ENCODE measurements at regions of chr18 and their contacts with region 1.

Region 1: GRCh38 chr18:10851824-10852319 is 297.5 kb downstream of the PIEZO2 start:
- DNase-seq: no peak
- H3K4me3 Mint-ChIP-seq: no peak overlapping the region
- H3K27ac Mint-ChIP-seq: no peak overlapping the region
- H3K4me1 Mint-ChIP-seq: no peaks in the 10 kb centered on the region
- H3K27me3 Mint-ChIP-seq: peaks cover 21% of the 10 kb centered on the region

Region 2: DNA sequence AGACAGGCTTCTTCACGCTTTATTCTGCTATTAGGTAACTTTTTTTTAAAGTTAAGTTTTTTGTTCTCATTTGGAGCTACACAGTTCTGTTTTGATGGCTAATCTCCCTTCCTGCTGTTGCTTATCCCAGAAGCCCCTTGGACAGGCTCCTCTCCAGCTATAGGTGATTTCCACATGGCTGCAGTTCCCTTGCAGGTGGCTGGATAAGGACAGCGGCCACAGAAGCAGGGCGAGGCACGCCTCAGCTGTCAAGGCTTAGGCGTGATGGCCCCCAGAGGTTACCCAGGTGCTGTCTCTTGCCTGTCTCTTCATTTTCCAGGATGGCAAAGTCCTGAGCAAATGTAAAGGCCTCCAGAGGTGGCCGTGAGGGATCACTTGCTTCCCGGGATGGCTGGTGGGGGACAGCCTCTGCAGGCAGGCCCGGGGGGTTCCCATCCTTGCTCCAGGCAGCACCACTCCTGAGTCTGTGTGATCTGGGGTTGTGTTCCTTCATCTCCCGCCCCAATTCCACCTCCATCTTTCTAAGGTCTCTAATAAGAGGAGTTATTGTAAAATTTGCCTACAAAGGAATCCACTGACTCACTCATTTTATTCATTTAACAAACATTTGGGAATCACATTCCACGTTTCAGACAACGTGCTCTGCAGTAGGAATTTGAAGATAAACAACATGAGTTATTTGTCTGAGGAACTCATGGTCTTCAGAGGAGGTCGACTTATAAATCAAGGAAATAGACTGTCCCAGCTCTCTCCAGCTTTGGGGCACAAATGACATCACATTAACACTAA is 272.6 kb before region 1 on chr18:
- CTCF ChIA-PET with region 1: no interaction called
- POLR2A ChIA-PET with region 1: no interaction called
- DNase-seq: no peak
- H3K4me3 Mint-ChIP-seq: no peak overlapping the region
- H3K27ac Mint-ChIP-seq: no peak overlapping the region
- H3K4me1 Mint-ChIP-seq: peaks cover 10% of the 10 kb centered on the region
- H3K27me3 Mint-ChIP-seq: no peaks in the 10 kb centered on the region

Region 3: DNA sequence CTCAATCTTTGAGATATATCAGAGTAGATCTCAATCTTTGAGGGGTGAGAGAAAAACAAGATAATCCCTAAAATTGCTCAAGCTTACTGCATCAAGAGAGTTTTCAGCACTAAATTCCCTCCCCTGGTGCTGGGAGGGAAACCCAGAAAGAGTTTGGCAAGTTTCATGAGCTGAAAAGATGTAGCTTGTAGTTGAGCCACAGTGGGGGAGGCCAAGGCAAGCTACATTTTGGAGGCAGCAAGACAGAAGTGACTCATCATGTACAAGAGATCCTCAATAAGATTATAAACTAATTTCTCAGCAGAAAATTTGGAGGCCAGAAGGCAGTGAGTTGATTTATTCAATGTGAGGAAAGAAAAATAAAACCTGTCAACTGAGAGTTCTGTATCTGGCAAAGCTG is 10.7 kb before region 1 on chr18:
- CTCF ChIA-PET with region 1: interaction called, 10 read pairs
- POLR2A ChIA-PET with region 1: no interaction called
- DNase-seq: no peak
- H3K4me3 Mint-ChIP-seq: no peak overlapping the region
- H3K27ac Mint-ChIP-seq: no peak overlapping the region
- H3K4me1 Mint-ChIP-seq: no peaks in the 10 kb centered on the region
- H3K27me3 Mint-ChIP-seq: peaks cover 5% of the 10 kb centered on the region

Region 4: GRCh38 chr18:10950876-10951630 is 99.2 kb after region 1 on chr18:
- CTCF ChIA-PET with region 1: no interaction called
- POLR2A ChIA-PET with region 1: no interaction called
- DNase-seq: no peak
- H3K4me3 Mint-ChIP-seq: no peak overlapping the region
- H3K27ac Mint-ChIP-seq: no peak overlapping the region
- H3K4me1 Mint-ChIP-seq: no peaks in the 10 kb centered on the region
- H3K27me3 Mint-ChIP-seq: no peaks in the 10 kb centered on the region

Region 5: GRCh38 chr18:11040823-11041656 is 189.2 kb after region 1 on chr18:
- CTCF ChIA-PET with region 1: interaction called, 11 read pairs
- POLR2A ChIA-PET with region 1: no interaction called
- DNase-seq: peak; percentile 17
- H3K4me3 Mint-ChIP-seq: no peak overlapping the region
- H3K27ac Mint-ChIP-seq: no peak overlapping the region
- H3K4me1 Mint-ChIP-seq: no peaks in the 10 kb centered on the region
- H3K27me3 Mint-ChIP-seq: peaks cover 4% of the 10 kb centered on the region

Region 6: GRCh38 chr18:11154368-11154989 is 302.6 kb after region 1 on chr18:
- CTCF ChIA-PET with region 1: interaction called, 16 read pairs
- POLR2A ChIA-PET with region 1: no interaction called
- DNase-seq: no peak
- H3K4me3 Mint-ChIP-seq: no peak overlapping the region
- H3K27ac Mint-ChIP-seq: no peak overlapping the region
- H3K4me1 Mint-ChIP-seq: no peaks in the 10 kb centered on the region
- H3K27me3 Mint-ChIP-seq: peaks cover 23% of the 10 kb centered on the region